ENCODE measurements at regions of chr1 and their contacts with region 1.

Region 1: GRCh38 chr1:201709564-201710295 is 119.2 kb upstream of the IPO9 start:
- DNase-seq: peak; percentile 50 to 92
- H3K4me3 ChIP-seq: no peak overlapping the region
- H3K27ac ChIP-seq: no peak overlapping the region
- H3K4me1 ChIP-seq: peaks cover 0 to 3% (median 2%) of the 10 kb centered on the region in 4 experiments; a peak in 4 of 7 replicates
- H3K27me3 ChIP-seq: no peaks in the 10 kb centered on the region
- CTCF ChIP-seq: peak; percentile 95 to 97 (median 97)
- EP300 ChIP-seq: no peak
- POLR2A ChIP-seq: no peak
- RAD21 ChIP-seq: peak; percentile 90 to 94

Region 2: DNA sequence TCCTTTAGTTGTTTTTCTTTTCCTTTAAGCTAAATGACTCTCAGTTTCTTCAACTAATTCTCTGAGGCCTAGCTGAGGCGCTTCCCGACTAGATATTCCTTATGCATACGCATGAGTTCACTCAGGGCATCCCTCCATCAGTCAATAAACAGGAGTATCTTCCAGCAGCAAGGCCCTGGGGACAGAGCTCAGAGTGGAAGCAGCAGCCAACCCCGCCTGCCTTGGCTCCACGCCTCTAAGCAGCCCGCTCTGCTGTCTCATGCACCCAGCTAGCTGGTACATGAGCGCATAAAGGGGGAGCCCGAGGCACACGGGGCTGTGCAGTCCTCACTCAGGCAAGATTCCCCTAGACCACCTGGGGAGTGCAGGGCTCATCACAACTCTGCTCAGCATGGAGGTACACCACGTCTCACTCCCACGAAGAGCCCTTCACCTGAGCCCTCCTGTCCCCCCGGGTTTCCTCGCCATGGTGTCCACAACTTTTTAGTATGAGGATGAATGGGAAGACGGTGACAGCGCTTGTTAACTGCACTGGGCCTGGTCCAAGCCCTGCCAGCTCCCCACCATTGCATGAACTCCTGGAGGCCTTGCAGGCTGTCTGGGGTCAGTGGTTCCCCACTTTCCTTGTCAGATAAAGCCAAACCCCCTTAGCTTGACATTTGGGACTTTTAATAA is 567.0 kb before region 1 on chr1:
- CTCF ChIA-PET with region 1: no interaction called
- POLR2A ChIA-PET with region 1: no interaction called
- DNase-seq: no peak
- H3K4me3 ChIP-seq: no peak overlapping the region
- H3K27ac ChIP-seq: no peak overlapping the region
- H3K4me1 ChIP-seq: no peaks in the 10 kb centered on the region
- H3K27me3 ChIP-seq: no peaks in the 10 kb centered on the region
- CTCF ChIP-seq: no peak
- EP300 ChIP-seq: no peak
- POLR2A ChIP-seq: no peak
- RAD21 ChIP-seq: no peak

Region 3: DNA sequence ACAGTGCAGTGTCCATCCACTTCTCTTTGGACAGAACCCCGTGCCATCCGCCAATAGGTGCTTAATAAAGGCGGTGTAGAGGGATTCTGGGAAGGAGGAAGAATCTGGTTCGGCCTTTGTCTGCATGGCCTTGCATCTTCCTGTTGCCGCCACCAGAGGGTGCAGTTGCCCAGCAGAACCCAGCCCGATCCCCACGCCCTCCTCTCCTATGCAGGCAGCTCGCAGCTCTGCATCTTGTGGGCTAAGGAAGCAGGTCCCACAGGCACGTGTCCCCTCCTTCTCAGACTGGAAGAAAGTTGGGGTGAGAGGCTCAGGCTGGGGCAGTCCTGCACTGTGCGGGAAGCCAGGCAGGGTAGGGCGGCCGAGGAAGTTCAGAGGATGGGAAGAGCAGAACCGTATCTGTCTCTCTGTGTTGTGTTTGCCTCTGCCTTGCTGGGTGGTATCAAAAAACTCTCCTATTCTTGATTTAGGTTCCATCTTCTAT is 150.0 kb before region 1 on chr1:
- CTCF ChIA-PET with region 1: interaction called, 499 read pairs
- POLR2A ChIA-PET with region 1: no interaction called
- DNase-seq: peak; percentile 72 to 88
- H3K4me3 ChIP-seq: no peak overlapping the region
- H3K27ac ChIP-seq: no peak overlapping the region
- H3K4me1 ChIP-seq: peaks cover 0 to 8% (median 3%) of the 10 kb centered on the region in 4 experiments; a peak in 4 of 7 replicates
- H3K27me3 ChIP-seq: 0 out of 7 replicates have a peak, but pooled peaks cover 0 to 2% (median 0%) of the 10 kb centered on the region in 4 experiments
- CTCF ChIP-seq: peak; percentile 95 to 99 (median 98)
- EP300 ChIP-seq: 0 out of 3 replicates have a peak, but pooled peaks of 1 of the 2 experiments have one; percentile 20
- POLR2A ChIP-seq: no peak
- RAD21 ChIP-seq: peak; percentile 100

Region 4: GRCh38 chr1:201649761-201650622 is 59.7 kb before region 1 on chr1:
- CTCF ChIA-PET with region 1: interaction called, 34 read pairs
- POLR2A ChIA-PET with region 1: interaction called, 5 read pairs
- DNase-seq: peak; percentile 47 to 90
- H3K4me3 ChIP-seq: peak overlapping the region; percentile 67 to 83 (median 70)
- H3K27ac ChIP-seq: no peak overlapping the region
- H3K4me1 ChIP-seq: peaks cover 13 to 33% (median 25%) of the 10 kb centered on the region in 4 experiments
- H3K27me3 ChIP-seq: peaks cover 0 to 22% (median 19%) of the 10 kb centered on the region in 4 experiments; a peak in 5 of 7 replicates
- CTCF ChIP-seq: no peak
- EP300 ChIP-seq: no peak
- POLR2A ChIP-seq: 0 out of 3 replicates have a peak, but pooled peaks of 1 of the 2 experiments have one; percentile 29
- RAD21 ChIP-seq: no peak

Region 5: GRCh38 chr1:201719812-201720521 is 10.2 kb after region 1 on chr1:
- CTCF ChIA-PET with region 1: interaction called, 216 read pairs
- POLR2A ChIA-PET with region 1: no interaction called
- DNase-seq: no peak
- H3K4me3 ChIP-seq: no peak overlapping the region
- H3K27ac ChIP-seq: 0 out of 2 replicates have a peak overlapping the region, but pooled peaks have one; percentile 1
- H3K4me1 ChIP-seq: peaks cover 0 to 12% (median 6%) of the 10 kb centered on the region in 4 experiments; a peak in 6 of 7 replicates
- H3K27me3 ChIP-seq: no peaks in the 10 kb centered on the region
- CTCF ChIP-seq: no peak
- EP300 ChIP-seq: no peak
- POLR2A ChIP-seq: no peak
- RAD21 ChIP-seq: no peak

Region 6: GRCh38 chr1:201769966-201770365 is 60.2 kb after region 1 on chr1:
- CTCF ChIA-PET with region 1: interaction called, 44 read pairs
- POLR2A ChIA-PET with region 1: no interaction called
- DNase-seq: no peak
- H3K4me3 ChIP-seq: no peak overlapping the region
- H3K27ac ChIP-seq: no peak overlapping the region
- H3K4me1 ChIP-seq: peaks cover 0 to 4% (median 0%) of the 10 kb centered on the region in 4 experiments; a peak in 1 of 7 replicates
- H3K27me3 ChIP-seq: no peaks in the 10 kb centered on the region
- CTCF ChIP-seq: no peak
- EP300 ChIP-seq: no peak
- POLR2A ChIP-seq: no peak
- RAD21 ChIP-seq: no peak

Region 7: GRCh38 chr1:202376247-202376646 is 666.5 kb after region 1 on chr1:
- CTCF ChIA-PET with region 1: no interaction called
- POLR2A ChIA-PET with region 1: no interaction called
- DNase-seq: no peak
- H3K4me3 ChIP-seq: no peak overlapping the region
- H3K27ac ChIP-seq: no peak overlapping the region
- H3K4me1 ChIP-seq: peaks cover under 1 to 15% (median 4%) of the 10 kb centered on the region in 4 experiments; a peak in 5 of 7 replicates
- H3K27me3 ChIP-seq: no peaks in the 10 kb centered on the region
- CTCF ChIP-seq: no peak
- EP300 ChIP-seq: no peak
- POLR2A ChIP-seq: no peak
- RAD21 ChIP-seq: no peak